Posterior vena cava (tissue), 2 donors: ENCODE measurements at regions of chr7 and their contacts with region 1.

Region 1: GRCh38 chr7:47622946-47623640 is 41.2 kb upstream of the TNS3 start:
- DNase-seq: no peak

Region 2: DNA sequence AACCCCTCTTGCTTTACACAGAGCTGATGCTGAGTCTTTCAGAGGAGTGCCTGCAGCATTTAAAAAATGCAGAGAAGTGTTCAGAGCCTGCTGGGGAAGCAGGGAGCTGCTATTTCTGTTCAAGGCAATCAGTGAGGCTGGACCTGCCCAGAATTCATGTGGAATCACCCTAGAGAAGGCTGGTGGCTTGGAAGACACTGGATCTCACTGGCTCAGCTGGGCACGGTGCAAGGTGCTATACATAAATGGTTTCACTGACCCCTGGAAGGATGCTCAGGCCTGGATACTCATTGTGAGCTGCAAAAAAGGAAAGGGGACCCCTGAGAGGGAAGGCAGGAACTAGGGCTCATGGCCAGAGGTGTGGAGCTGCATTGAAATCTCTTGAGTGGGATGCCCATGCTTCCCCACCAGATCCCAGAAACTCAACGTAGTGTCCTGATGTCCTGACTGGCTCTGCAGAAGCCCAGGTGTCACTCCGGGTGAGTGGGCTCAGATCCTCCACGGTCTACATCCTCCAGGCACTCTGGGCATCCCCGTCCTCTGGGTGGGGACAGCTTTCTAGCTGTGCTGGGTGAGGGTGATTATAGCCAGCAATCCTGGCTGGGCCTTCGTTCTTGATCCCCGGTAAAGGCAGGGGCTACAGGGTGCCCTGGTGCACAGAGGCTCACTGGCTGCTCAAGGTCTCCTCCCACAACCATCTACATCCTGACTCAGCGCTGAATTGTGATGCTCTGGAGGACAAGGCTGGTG is 36.0 kb after region 1 on chr7:
- intact Hi-C with region 1: loop called in 1 of 2 experiments (anchors 1 kb)
- DNase-seq: peak; percentile 62

Region 3: DNA sequence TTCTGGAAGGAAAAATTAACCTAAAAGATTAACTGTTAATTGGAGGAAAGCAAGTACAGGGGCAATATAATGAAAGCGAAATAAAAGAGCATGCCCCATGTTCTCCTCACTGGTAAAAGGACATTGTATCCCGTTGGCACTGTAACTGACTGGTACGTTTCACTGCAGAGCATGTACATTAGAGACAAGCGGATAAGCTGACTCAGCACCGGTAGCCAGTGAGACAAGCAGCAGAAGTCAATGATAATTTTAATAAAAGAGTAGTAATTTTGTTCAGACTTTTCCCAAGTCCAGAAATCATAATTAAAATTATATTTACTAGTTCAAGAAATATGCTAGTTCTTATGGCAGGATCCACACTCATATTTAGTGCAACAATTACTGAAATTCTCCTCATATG is 1988.9 kb after region 1 on chr7:
- intact Hi-C with region 1: no loop called
- DNase-seq: no peak